ENCODE measurements at regions of chr6 and their contacts with region 1.

Region 1: GRCh38 chr6:28923318-28924102 is at the start of gene TRIM27:
- DNase-seq: peak; percentile 91
- H3K4me3 ChIP-seq: peak within 1 kb of the TSS; percentile 93
- H3K27ac ChIP-seq: peak within 1 kb of the TSS; percentile 73
- H3K4me1 ChIP-seq: peaks cover 26% of the 10 kb centered on the region
- CTCF ChIP-seq: 0 out of 2 replicates have a peak, but pooled peaks have one; percentile 18
- total RNA-seq, gene TRIM27: 126 and 130 TPM in 2 replicates

Region 2: DNA sequence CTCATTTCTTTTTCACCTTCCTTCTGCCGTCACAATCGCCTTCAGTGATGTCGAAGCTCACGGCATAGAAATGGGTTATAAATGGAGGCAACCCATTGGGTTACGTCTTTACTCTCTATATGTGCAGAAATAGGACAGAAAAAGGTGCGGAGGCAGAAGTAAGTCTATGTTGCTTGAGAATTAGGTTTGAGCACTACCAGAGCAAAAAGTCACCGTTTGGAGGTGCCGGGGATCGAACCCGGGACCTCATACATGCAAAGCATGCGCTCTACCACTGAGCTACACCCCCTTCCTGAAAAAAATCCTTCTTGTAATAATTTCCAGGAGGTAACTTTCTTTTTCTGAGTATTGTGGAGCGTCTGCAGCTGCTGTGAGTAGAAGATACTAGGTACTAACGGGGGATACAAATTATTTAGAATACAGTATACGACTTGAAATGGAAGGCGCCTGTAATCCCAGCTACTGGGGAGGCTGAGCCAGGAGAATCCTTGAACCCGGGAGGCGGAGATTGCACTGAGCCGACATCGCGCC is 133.9 kb before region 1 on chr6:
- CTCF ChIA-PET with region 1: no interaction called
- POLR2A ChIA-PET with region 1: no interaction called
- intact Hi-C with region 1: no loop called
- DNase-seq: peak; percentile 13
- H3K4me3 ChIP-seq: no peak overlapping the region
- H3K27ac ChIP-seq: no peak overlapping the region
- H3K4me1 ChIP-seq: no peaks in the 10 kb centered on the region
- CTCF ChIP-seq: no peak

Region 3: GRCh38 chr6:28910902-28911690 is 12.4 kb before region 1 on chr6:
- CTCF ChIA-PET with region 1: no interaction called
- POLR2A ChIA-PET with region 1: interaction called, 37 read pairs
- intact Hi-C with region 1: no loop called
- DNase-seq: no peak
- H3K4me3 ChIP-seq: no peak overlapping the region
- H3K27ac ChIP-seq: no peak overlapping the region
- H3K4me1 ChIP-seq: no peaks in the 10 kb centered on the region
- CTCF ChIP-seq: no peak

Region 4: GRCh38 chr6:29183594-29183993 is 260.1 kb after region 1 on chr6:
- CTCF ChIA-PET with region 1: no interaction called
- POLR2A ChIA-PET with region 1: no interaction called
- intact Hi-C with region 1: no loop called
- DNase-seq: no peak
- H3K4me3 ChIP-seq: no peak overlapping the region
- H3K27ac ChIP-seq: no peak overlapping the region
- H3K4me1 ChIP-seq: no peaks in the 10 kb centered on the region
- CTCF ChIP-seq: no peak

Region 5: DNA sequence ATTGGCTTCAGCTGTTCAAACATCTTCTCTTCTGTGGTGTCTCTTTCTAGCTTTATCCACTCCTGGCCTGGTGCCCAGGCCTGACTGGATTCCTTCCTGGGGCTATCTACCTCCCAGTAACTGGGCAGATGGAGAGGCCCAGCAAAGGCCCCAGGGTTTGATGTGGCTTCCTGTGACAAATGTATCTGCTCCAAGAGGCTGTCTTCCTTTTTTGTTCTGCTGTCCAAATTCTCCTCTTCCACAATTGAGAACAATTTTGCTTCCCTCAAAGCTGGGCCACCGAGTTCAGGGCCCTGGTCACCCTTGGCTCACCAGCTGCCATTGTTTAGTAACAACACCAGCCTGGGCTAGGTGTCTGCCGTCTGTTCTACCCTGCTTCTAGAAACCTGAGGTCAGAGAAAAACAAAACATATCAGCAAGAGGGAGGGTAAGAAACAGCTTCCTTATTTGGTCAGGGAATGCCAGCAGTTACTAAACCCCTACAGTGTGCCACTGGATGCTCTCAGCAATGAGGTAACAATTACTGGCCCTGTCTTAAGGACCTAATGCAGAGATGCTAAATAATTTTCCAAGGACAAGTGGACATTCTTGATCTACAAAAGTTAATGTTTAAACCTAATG is 753.6 kb after region 1 on chr6:
- CTCF ChIA-PET with region 1: no interaction called
- POLR2A ChIA-PET with region 1: no interaction called
- intact Hi-C with region 1: no loop called
- DNase-seq: no peak
- H3K4me3 ChIP-seq: no peak overlapping the region
- H3K27ac ChIP-seq: no peak overlapping the region
- H3K4me1 ChIP-seq: no peaks in the 10 kb centered on the region
- CTCF ChIP-seq: no peak

Measured in OCI-LY7 (cell line).